ENCODE measurements at regions of chr1 and their contacts with region 1.

Region 1: GRCh38 chr1:32221980-32222755 is at the starts of genes EIF3I and TMEM234:
- DNase-seq: peak; percentile 81 to 96 (median 88)
- ATAC-seq: peak; percentile 89
- H3K4me3 ChIP-seq: peak within 1 kb of the TSS; percentile 79
- H3K4me3 Mint-ChIP-seq: peak within 1 kb of the TSS; percentile 99
- H3K27ac ChIP-seq: peak within 1 kb of the TSS; percentile 94
- H3K27ac Mint-ChIP-seq: peak within 1 kb of the TSS; percentile 99
- H3K4me1 ChIP-seq: peaks cover 34% of the 10 kb centered on the region
- H3K4me1 Mint-ChIP-seq: peaks cover 38% of the 10 kb centered on the region
- H3K27me3 ChIP-seq: no peaks in the 10 kb centered on the region
- H3K27me3 Mint-ChIP-seq: no peaks in the 10 kb centered on the region
- CTCF ChIP-seq: no peak
- total RNA-seq, gene EIF3I: 103 to 110 TPM
- total RNA-seq, gene TMEM234: 11.5 to 12.8 TPM

Region 2: DNA sequence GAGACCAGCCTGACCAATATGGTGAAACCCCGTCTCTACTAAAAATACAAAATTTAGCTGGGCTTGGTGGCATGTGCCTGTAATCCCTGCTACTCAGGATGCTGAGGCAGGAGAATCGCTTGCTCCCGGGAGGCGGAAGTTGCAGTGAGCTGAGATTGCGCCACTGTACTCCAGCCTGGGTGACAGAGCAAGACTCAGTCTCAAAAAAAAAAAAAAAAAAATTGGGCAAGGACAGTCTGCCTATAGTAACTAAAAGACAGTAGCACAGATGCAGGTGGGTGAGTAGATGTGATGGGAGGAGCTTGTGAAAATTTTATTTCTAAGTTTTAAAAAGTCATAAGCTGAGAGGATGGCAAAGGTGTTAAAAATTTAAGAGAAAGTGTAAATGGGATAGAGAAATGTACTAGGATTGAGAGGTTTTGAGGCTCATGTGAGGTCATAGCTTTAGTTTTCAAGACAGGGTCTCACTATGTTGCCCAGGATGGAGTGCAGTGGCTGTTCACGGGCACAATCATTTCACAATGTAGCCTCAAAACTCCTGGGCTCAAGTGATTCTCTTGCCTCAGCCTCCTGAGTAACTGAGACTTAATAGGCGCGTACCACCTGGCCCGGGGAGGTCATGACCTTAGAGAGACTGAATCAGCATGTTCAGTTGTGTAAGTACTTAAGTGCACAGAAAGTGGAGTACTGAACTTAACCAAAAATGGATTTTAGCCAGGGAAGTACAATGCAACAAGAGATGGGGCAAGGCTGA is 317.7 kb before region 1 on chr1:
- CTCF ChIA-PET with region 1: no interaction called
- POLR2A ChIA-PET with region 1: no interaction called
- intact Hi-C with region 1: no loop called
- DNase-seq: peak in 2 of 14 experiments; percentile 39 to 46
- ATAC-seq: peak; percentile 32
- H3K4me3 ChIP-seq: no peak overlapping the region
- H3K4me3 Mint-ChIP-seq: no peak overlapping the region
- H3K27ac ChIP-seq: no peak overlapping the region
- H3K27ac Mint-ChIP-seq: peak overlapping the region; percentile 76
- H3K4me1 ChIP-seq: no peaks in the 10 kb centered on the region
- H3K4me1 Mint-ChIP-seq: peaks cover 60% of the 10 kb centered on the region
- H3K27me3 ChIP-seq: no peaks in the 10 kb centered on the region
- H3K27me3 Mint-ChIP-seq: no peaks in the 10 kb centered on the region
- CTCF ChIP-seq: no peak

Region 3: GRCh38 chr1:32179443-32180185 is 42.6 kb before region 1 on chr1 and contains the start of gene TXLNA:
- CTCF ChIA-PET with region 1: no interaction called
- POLR2A ChIA-PET with region 1: interaction called, 3 read pairs
- intact Hi-C with region 1: loop called in 1 of 2 experiments (anchors 2 kb)
- DNase-seq: peak; percentile 77 to 94 (median 84)
- ATAC-seq: peak; percentile 85
- H3K4me3 ChIP-seq: peak within 1 kb of the TSS; percentile 90
- H3K4me3 Mint-ChIP-seq: peak within 1 kb of the TSS; percentile 91
- H3K27ac ChIP-seq: peak within 1 kb of the TSS; percentile 77 to 93
- H3K27ac Mint-ChIP-seq: peak within 1 kb of the TSS; percentile 93
- H3K4me1 ChIP-seq: peaks cover 46% of the 10 kb centered on the region
- H3K4me1 Mint-ChIP-seq: peaks cover 49% of the 10 kb centered on the region
- H3K27me3 ChIP-seq: no peaks in the 10 kb centered on the region
- H3K27me3 Mint-ChIP-seq: no peaks in the 10 kb centered on the region
- CTCF ChIP-seq: no peak
- total RNA-seq, gene TXLNA: 6.3 to 6.4 TPM

Region 4: DNA sequence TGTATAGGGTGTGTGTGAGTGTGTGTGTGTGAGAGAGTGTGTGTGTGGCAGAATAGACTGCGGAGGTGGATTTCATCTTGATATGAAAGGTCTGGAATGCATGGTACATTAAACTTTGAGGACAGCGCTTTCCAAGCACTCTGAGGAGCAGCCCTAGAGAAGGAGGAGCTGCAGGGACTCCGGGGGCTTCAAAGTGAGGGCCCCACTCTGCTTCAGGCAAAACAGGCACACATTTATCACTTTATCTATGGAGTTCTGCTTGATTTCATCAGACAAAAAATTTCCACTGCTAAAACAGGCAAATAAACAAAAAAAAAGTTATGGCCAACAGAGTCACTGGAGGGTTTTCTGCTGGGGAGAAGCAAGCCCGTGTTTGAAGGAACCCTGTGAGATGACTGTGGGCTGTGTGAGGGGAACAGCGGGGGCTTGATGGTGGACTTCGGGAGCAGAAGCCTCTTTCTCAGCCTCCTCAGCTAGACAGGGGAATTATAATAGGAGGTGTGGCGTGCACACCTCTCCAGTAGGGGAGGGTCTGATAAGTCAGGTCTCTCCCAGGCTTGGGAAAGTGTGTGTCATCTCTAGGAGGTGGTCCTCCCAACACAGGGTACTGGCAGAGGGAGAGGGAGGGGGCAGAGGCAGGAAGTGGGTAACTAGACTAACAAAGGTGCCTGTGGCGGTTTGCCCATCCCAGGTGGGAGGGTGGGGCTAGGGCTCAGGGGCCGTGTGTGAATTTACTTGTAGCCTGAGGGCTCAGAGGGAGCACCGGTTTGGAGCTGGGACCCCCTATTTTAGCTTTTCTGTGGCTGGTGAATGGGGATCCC is 51.4 kb after region 1 on chr1:
- CTCF ChIA-PET with region 1: no interaction called
- POLR2A ChIA-PET with region 1: interaction called, 8 read pairs
- intact Hi-C with region 1: loop called in 1 of 2 experiments (anchors 10 kb)
- DNase-seq: peak; percentile 51 to 92 (median 84)
- ATAC-seq: peak; percentile 89
- H3K4me3 ChIP-seq: peak overlapping the region; percentile 44
- H3K4me3 Mint-ChIP-seq: peak overlapping the region; percentile 87
- H3K27ac ChIP-seq: peak overlapping the region; percentile 60 to 78
- H3K27ac Mint-ChIP-seq: peak overlapping the region; percentile 93
- H3K4me1 ChIP-seq: peaks cover 76% of the 10 kb centered on the region
- H3K4me1 Mint-ChIP-seq: peaks cover 56% of the 10 kb centered on the region
- H3K27me3 ChIP-seq: no peaks in the 10 kb centered on the region
- H3K27me3 Mint-ChIP-seq: no peaks in the 10 kb centered on the region
- CTCF ChIP-seq: no peak

Region 5: GRCh38 chr1:32650752-32651460 is 428.7 kb after region 1 on chr1 and contains the start of gene RBBP4:
- CTCF ChIA-PET with region 1: no interaction called
- POLR2A ChIA-PET with region 1: no interaction called
- intact Hi-C with region 1: no loop called
- DNase-seq: peak; percentile 94 to 99 (median 98)
- ATAC-seq: peak; percentile 79
- H3K4me3 ChIP-seq: peak within 1 kb of the TSS; percentile 80
- H3K4me3 Mint-ChIP-seq: peak within 1 kb of the TSS; percentile 94
- H3K27ac ChIP-seq: peak within 1 kb of the TSS; percentile 98 to 99
- H3K27ac Mint-ChIP-seq: peak within 1 kb of the TSS; percentile 95
- H3K4me1 ChIP-seq: peaks cover 58% of the 10 kb centered on the region
- H3K4me1 Mint-ChIP-seq: peaks cover 66% of the 10 kb centered on the region
- H3K27me3 ChIP-seq: no peaks in the 10 kb centered on the region
- H3K27me3 Mint-ChIP-seq: no peaks in the 10 kb centered on the region
- CTCF ChIP-seq: no peak
- total RNA-seq, gene RBBP4: 108 to 117 TPM

Measured in CD4-positive, alpha-beta T cell (primary cell).